ENCODE measurements at regions of chr3 and their contacts with region 1.

Region 1: GRCh38 chr3:48446425-48447193 is at the start of gene ATRIP:
- DNase-seq: peak; percentile 91
- ATAC-seq: peak; percentile 98
- H3K4me3 Mint-ChIP-seq: peak within 1 kb of the TSS; percentile 83
- H3K27ac Mint-ChIP-seq: peak within 1 kb of the TSS; percentile 79
- H3K4me1 Mint-ChIP-seq: peaks cover 42% of the 10 kb centered on the region
- H3K27me3 Mint-ChIP-seq: no peaks in the 10 kb centered on the region
- total RNA-seq, gene ATRIP: 16.8 to 21.0 TPM

Region 2: GRCh38 chr3:47571391-47572175 is 875.0 kb before region 1 on chr3:
- CTCF ChIA-PET with region 1: no interaction called
- POLR2A ChIA-PET with region 1: no interaction called
- intact Hi-C with region 1: no loop called
- DNase-seq: no peak
- ATAC-seq: no peak
- H3K4me3 Mint-ChIP-seq: no peak overlapping the region
- H3K27ac Mint-ChIP-seq: no peak overlapping the region
- H3K4me1 Mint-ChIP-seq: no peaks in the 10 kb centered on the region
- H3K27me3 Mint-ChIP-seq: peaks cover 6% of the 10 kb centered on the region

Region 3: GRCh38 chr3:48240711-48241491 is 205.7 kb before region 1 on chr3 and contains the start of gene ZNF589:
- CTCF ChIA-PET with region 1: no interaction called
- POLR2A ChIA-PET with region 1: no interaction called
- intact Hi-C with region 1: loop called in 1 of 2 experiments (anchors 1 kb)
- DNase-seq: peak; percentile 97
- ATAC-seq: peak; percentile 99
- H3K4me3 Mint-ChIP-seq: peak within 1 kb of the TSS; percentile 87
- H3K27ac Mint-ChIP-seq: peak within 1 kb of the TSS; percentile 84
- H3K4me1 Mint-ChIP-seq: peaks cover 26% of the 10 kb centered on the region
- H3K27me3 Mint-ChIP-seq: no peaks in the 10 kb centered on the region
- total RNA-seq, gene ZNF589: 28.6 to 29.6 TPM

Region 4: GRCh38 chr3:48347500-48347899 is 99.1 kb before region 1 on chr3:
- CTCF ChIA-PET with region 1: no interaction called
- POLR2A ChIA-PET with region 1: no interaction called
- intact Hi-C with region 1: no loop called
- DNase-seq: no peak
- ATAC-seq: no peak
- H3K4me3 Mint-ChIP-seq: no peak overlapping the region
- H3K27ac Mint-ChIP-seq: no peak overlapping the region
- H3K4me1 Mint-ChIP-seq: no peaks in the 10 kb centered on the region
- H3K27me3 Mint-ChIP-seq: peaks cover 3% of the 10 kb centered on the region

Region 5: DNA sequence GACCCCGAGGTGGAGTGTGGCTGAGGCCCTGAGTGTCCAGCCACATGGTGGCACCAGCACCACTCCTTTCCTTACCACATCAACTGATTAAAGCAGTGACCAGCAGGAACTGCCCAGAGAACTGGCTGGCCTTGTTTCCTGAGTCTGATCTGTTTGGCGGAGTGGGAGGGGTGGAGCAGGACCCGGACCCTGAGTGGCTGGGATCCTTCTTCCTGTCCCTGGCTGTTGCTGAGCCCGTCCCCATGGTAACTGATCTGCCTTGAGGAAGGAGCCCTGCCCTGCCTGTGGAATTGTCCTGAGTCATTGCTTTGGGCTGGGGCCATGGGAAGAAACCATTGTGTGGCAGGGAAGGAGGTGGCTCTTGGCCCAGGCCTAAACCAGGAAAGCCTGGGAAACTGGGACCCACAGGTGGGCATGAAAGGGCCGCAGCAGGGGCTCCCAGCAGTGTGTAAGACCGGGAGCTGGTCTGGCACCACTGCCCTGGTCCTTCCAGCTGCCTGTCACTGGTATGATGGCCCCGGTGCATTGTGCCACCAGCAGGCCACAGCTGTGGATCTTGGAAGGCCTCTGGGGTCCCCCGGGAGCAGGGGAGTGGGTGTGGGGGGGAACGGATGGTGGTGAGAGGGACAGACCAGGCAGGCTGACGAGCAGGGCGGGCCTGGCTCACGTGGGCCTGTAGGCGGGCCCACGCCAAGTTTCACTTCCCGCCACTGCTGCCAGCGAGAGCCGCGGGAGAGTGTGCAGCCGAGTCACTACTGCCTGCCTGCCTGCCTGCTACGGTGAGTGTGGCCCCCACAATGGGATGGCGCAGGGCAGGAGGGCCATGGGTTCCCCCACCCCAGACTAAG is 19.1 kb after region 1 on chr3:
- CTCF ChIA-PET with region 1: interaction called, 4 read pairs
- POLR2A ChIA-PET with region 1: no interaction called
- intact Hi-C with region 1: loop called in 1 of 2 experiments (anchors 1 kb)
- DNase-seq: peak; percentile 90
- ATAC-seq: peak; percentile 92
- H3K4me3 Mint-ChIP-seq: peak overlapping the region; percentile 93
- H3K27ac Mint-ChIP-seq: peak overlapping the region; percentile 96
- H3K4me1 Mint-ChIP-seq: peaks cover 46% of the 10 kb centered on the region
- H3K27me3 Mint-ChIP-seq: no peaks in the 10 kb centered on the region

Region 6: DNA sequence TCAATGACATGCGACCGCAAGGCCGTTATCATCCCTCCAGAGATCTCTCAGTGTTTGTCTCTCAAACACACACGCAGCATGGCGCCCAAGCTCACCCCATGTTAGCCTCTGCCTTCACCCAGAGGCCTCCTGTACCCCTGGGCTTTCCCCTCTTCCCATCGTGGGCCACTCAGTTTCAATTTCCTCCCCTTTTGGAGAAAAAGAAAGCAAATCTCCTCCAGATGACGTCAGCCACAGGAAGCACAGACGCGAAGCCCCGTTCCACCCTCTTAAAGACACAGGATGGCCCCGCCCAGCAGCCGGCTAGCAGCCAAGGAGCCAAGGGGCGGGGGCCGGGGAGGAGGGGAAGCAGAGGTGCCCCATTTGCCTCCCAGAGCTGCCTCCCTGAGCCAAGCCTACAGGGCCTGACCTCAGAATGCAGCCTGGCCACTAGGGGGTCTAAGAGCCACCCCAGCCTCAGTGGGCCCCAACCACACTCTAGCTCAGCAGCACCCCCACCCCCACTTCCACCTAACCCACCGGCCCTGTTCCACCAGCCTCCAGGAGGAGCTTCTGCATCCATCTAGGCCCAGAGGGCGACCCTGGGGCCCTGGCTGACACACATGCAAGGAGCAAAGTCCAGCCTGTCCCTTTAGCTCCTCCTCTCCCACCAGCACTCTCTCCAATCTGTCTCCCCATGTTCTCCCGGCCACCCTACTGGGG is 26.5 kb after region 1 on chr3:
- CTCF ChIA-PET with region 1: interaction called, 5 read pairs
- POLR2A ChIA-PET with region 1: interaction called, 3 read pairs
- intact Hi-C with region 1: loop called (anchors 1 to 2 kb)
- DNase-seq: peak; percentile 99
- ATAC-seq: peak; percentile 90
- H3K4me3 Mint-ChIP-seq: peak overlapping the region; percentile 74
- H3K27ac Mint-ChIP-seq: peak overlapping the region; percentile 93
- H3K4me1 Mint-ChIP-seq: peaks cover 49% of the 10 kb centered on the region
- H3K27me3 Mint-ChIP-seq: no peaks in the 10 kb centered on the region

Region 7: GRCh38 chr3:48486952-48487351 is 40.3 kb after region 1 on chr3:
- CTCF ChIA-PET with region 1: no interaction called
- POLR2A ChIA-PET with region 1: no interaction called
- intact Hi-C with region 1: no loop called
- DNase-seq: no peak
- ATAC-seq: no peak
- H3K4me3 Mint-ChIP-seq: no peak overlapping the region
- H3K27ac Mint-ChIP-seq: no peak overlapping the region
- H3K4me1 Mint-ChIP-seq: no peaks in the 10 kb centered on the region
- H3K27me3 Mint-ChIP-seq: no peaks in the 10 kb centered on the region

Region 8: DNA sequence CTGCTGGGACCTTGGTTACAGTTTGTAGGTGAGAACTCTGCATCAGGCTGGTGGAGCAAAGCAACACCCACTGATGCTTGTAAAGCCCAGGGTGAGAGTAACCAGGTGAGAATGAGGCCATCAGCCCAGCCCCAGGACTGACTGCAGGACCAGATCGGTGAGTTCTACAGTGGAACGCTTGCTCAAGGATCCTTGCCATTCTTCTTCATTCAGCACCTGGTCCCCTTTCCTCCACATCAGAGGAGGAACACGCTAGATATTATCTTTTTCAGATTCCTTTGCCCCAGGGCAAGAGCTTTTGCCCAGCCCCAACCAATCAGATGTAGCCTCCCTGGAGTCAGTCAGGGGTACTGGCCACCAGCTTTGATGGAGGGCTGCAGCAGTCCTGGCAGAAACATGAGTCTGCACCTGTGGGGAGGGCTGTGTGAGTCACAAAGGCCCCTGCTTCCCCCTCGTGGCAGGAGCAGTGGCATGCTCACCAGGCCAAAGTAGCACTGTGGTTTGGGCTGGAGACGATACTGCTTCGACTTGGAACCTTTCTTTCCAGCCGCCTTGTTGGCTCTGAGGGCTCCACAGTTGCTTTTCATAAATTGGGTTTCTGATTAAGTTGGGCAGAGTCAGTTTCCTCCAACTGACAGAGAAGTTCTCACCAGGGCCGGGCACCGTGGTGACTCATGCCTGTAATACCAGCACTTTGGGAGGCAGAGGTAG is 60.9 kb after region 1 on chr3:
- CTCF ChIA-PET with region 1: interaction called, 3 read pairs
- POLR2A ChIA-PET with region 1: no interaction called
- intact Hi-C with region 1: loop called (anchors 2 to 10 kb)
- DNase-seq: peak; percentile 83
- ATAC-seq: peak; percentile 82
- H3K4me3 Mint-ChIP-seq: peak overlapping the region; percentile 28
- H3K27ac Mint-ChIP-seq: peak overlapping the region; percentile 80
- H3K4me1 Mint-ChIP-seq: peaks cover 45% of the 10 kb centered on the region
- H3K27me3 Mint-ChIP-seq: no peaks in the 10 kb centered on the region

Region 9: DNA sequence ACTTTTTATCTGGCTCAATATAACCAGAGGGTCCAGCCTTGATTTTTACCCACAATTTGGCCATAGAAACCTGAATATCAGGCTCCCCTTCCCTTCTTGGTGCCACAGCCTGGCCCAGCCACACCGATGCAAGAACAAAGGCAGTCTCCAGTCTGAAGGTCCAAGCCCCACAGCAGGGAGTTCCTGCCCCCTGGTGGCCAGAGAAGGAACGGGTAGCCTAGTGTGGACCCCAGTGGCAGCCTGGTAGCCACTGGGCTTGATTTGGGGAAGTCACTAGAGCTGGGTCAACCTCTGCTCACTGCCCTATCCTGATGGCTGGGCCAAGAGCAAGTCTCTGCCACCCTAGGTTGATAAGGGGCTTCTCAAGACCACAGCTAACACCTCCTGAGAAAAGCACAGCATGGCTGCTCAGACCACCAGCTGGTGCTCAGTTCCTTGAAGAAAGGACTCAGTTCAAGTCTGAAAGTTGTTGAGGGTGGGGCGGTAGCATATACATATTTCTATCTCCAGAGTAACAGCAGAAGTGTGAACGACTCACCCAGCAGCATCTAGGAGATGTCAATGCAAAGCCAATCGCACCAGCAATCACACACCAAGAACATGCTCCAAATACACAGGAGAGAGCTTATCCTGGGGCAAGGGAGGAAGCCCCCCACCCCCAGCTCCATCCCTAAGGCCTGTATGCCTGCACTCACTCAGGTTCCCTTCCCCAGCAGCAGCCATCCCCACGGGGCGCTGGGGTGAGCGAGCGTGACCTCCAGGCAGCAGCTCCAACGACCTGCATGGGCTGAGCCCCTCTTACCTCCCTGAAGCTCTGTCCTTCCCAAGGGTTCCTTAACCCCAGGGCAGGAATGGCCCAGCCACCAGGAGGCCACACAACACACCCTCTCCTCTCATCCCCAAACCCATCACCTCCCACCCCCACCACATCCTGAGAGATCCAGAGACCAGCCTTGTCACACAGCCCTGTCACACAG is 102.4 kb after region 1 on chr3:
- CTCF ChIA-PET with region 1: interaction called, 7 read pairs
- POLR2A ChIA-PET with region 1: no interaction called
- intact Hi-C with region 1: loop called in 1 of 2 experiments (anchors 1 kb)
- DNase-seq: peak; percentile 89
- ATAC-seq: peak; percentile 96
- H3K4me3 Mint-ChIP-seq: no peak overlapping the region
- H3K27ac Mint-ChIP-seq: no peak overlapping the region
- H3K4me1 Mint-ChIP-seq: peaks cover 9% of the 10 kb centered on the region
- H3K27me3 Mint-ChIP-seq: no peaks in the 10 kb centered on the region

Region 10: GRCh38 chr3:48609088-48610005 is 162.7 kb after region 1 on chr3 and contains the start of gene UQCRC1:
- CTCF ChIA-PET with region 1: no interaction called
- POLR2A ChIA-PET with region 1: no interaction called
- intact Hi-C with region 1: loop called in 1 of 2 experiments (anchors 2 kb)
- DNase-seq: peak; percentile 96
- ATAC-seq: peak; percentile 96
- H3K4me3 Mint-ChIP-seq: peak within 1 kb of the TSS; percentile 97
- H3K27ac Mint-ChIP-seq: peak within 1 kb of the TSS; percentile 95
- H3K4me1 Mint-ChIP-seq: peaks cover 27% of the 10 kb centered on the region
- H3K27me3 Mint-ChIP-seq: no peaks in the 10 kb centered on the region
- total RNA-seq, gene UQCRC1: 205 to 231 TPM